Adrenal gland (tissue), 19 donors: ENCODE measurements at regions of chr22 and their contacts with region 1.

Region 1: GRCh38 chr22:50341977-50342650 is 1.0 kb upstream of the PPP6R2 start:
- DNase-seq: peak; percentile 87 to 96 (median 93)
- H3K4me3 ChIP-seq: peak overlapping the region in 2 of 4 donors; percentile 67 to 99
- H3K27ac ChIP-seq: peak overlapping the region in 3 of 5 donors; percentile 73 to 89 (median 75)
- H3K4me1 ChIP-seq: peaks cover 9 to 13% of the 10 kb centered on the region in 2 donors
- H3K27me3 ChIP-seq: no peaks in the 10 kb centered on the region
- CTCF ChIP-seq: peak; percentile 92 to 98 (median 97)
- POLR2A ChIP-seq: no peak

Region 2: DNA sequence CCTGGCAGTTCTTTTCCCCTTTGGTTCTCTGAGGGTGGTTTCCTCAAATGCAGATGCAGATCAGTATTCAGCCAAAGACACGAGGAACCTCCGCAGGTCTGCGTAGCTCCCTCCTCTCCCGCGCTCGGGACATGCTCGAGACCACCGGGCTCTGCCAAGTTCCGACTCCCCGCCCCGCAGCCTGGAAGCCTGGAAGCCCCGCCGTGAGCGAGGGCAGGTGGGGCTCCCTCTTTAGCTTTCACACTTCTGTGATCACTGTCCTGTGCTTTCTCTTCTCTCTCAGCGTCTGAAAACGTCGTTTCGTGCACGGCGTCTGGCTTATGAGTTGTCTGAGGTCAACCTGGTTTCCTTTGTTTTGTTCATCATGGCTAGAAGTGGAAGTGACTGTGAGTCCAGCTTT is 461.8 kb before region 1 on chr22:
- intact Hi-C with region 1: no loop called
- DNase-seq: no peak
- H3K4me3 ChIP-seq: no peak overlapping the region
- H3K27ac ChIP-seq: no peak overlapping the region
- H3K4me1 ChIP-seq: no peaks in the 10 kb centered on the region
- H3K27me3 ChIP-seq: no peaks in the 10 kb centered on the region
- CTCF ChIP-seq: no peak
- POLR2A ChIP-seq: no peak

Region 3: GRCh38 chr22:50058906-50059880 is 282.9 kb before region 1 on chr22:
- intact Hi-C with region 1: no loop called
- DNase-seq: peak in 1 of 7 donors; percentile 20
- H3K4me3 ChIP-seq: peak overlapping the region in 1 of 4 donors; percentile 34
- H3K27ac ChIP-seq: no peak overlapping the region
- H3K4me1 ChIP-seq: peaks cover 0 to 5% of the 10 kb centered on the region in 2 donors
- H3K27me3 ChIP-seq: peaks cover 27% of the 10 kb centered on the region
- CTCF ChIP-seq: no peak
- POLR2A ChIP-seq: no peak

Region 4: DNA sequence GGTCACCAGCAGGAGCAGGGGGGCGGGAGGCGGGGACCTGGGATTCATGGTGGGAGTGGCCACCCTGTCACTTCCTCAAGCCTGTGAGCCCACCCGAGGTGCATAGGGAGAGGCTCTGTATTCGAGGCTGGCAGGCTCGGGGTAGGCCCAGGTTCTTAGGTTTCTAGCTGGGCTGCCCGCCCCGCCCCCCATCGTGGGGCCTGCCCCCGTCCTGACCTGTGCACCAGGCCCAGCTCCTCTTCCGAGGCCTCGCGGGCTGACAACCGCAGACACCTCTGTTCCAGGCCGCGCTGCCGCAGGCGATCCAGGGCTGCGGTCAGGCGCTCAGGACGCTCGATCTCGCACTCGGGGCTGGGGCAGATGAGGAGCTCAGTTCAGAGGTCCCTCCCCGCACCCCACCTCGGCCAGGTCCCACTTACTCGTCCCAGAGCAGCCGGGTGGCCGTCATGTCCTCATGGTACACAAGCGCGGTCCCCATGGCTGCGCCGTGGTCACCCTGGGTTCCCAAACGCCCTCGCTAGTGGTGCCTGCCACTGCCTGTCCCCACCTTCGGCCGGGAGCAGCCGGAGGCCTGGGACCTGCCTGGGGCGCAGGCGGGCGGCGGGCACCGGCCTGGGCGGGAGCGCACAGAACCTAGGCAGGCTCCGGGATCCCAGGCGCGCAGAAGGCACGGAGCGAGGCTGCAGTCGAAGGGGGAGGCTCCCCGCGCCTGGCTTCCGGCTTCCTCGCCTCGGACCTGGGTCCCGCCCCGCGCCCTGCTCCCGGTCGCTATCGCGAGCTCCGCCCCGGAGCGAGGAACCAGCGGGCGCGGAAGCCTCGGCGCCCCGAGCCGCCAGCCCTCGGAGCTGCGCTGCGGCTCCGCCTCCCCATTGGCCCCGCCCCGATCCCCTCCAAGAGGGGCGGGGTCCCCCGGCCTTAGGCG is 91.3 kb before region 1 on chr22 and contains the start of gene HDAC10:
- intact Hi-C with region 1: loop called in 1 of 2 experiments (anchors 5 kb)
- DNase-seq: peak; percentile 73 to 84 (median 77)
- H3K4me3 ChIP-seq: peak within 1 kb of the TSS; percentile 21 to 93 (median 48)
- H3K27ac ChIP-seq: peak within 1 kb of the TSS in 3 of 5 donors; percentile 43 to 80 (median 67)
- H3K4me1 ChIP-seq: peaks cover 21 to 23% of the 10 kb centered on the region in 2 donors
- H3K27me3 ChIP-seq: no peaks in the 10 kb centered on the region
- CTCF ChIP-seq: no peak
- POLR2A ChIP-seq: peak in 1 of 2 donors; percentile 35
- total RNA-seq, gene HDAC10: 9.7 to 72.1 (median 39.1) TPM

Region 5: GRCh38 chr22:50276143-50276542 is 66.0 kb before region 1 on chr22:
- intact Hi-C with region 1: loop called in 1 of 2 experiments (anchors 2 kb)
- DNase-seq: peak; percentile 77 to 89 (median 84)
- H3K4me3 ChIP-seq: no peak overlapping the region
- H3K27ac ChIP-seq: peak overlapping the region in 2 of 5 donors; percentile 30 to 39
- H3K4me1 ChIP-seq: peaks cover 8 to 17% of the 10 kb centered on the region in 2 donors
- H3K27me3 ChIP-seq: no peaks in the 10 kb centered on the region
- CTCF ChIP-seq: peak; percentile 9 to 67 (median 32)
- POLR2A ChIP-seq: no peak

Region 6: DNA sequence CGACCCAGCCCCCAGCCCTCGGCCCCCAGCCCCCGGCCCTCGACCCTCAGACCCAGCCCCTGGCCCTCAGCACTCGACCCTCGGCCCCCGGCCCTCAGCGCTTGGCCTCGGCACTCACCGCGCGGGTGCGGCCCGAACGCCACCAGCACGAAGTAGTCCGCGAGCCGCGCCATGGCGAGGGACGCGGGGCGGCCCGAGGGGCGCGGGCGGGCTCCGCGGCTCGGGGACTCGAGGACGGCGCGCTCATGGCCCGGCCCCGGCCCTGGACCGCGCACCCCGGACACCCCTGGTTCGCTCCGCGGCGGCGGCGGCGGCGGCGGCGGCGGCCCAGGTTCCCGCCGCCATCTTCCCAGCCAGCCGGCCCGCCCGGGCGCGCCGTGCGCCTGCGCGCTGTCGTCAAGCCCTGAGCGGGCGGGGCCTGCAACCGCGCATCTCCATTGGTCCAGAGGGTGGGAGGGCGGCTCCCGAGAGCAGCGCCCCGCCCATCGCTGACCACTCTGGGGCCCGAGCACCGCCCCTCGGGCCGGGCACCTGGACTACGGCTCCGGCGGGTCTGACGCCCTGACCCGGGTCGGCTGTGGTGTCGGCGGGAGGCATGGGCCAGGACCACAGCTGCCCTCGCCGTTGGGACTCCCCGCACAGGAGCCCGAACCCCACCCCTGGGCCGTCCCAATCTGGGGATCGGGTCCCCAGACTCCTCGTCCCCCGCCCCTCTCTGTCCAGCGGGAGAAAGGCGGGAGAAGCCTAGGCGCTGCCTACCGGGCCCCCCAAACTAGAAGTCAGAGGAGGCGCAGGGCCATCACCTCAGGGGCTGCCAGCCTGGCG is 132.8 kb after region 1 on chr22 and contains the start of gene SBF1:
- intact Hi-C with region 1: no loop called
- DNase-seq: peak; percentile 89 to 95 (median 92)
- H3K4me3 ChIP-seq: peak within 1 kb of the TSS; percentile 1 to 99 (median 55)
- H3K27ac ChIP-seq: peak within 1 kb of the TSS in 4 of 5 donors; percentile 50 to 94 (median 79)
- H3K4me1 ChIP-seq: peaks cover 25 to 47% of the 10 kb centered on the region in 2 donors
- H3K27me3 ChIP-seq: no peaks in the 10 kb centered on the region
- CTCF ChIP-seq: no peak
- POLR2A ChIP-seq: peak; percentile 76 to 79
- total RNA-seq, gene SBF1: 23.7 to 101 (median 79.2) TPM